Mammary epithelial cell (primary cell): ENCODE measurements at regions of chr17 and their contacts with region 1.

Region 1: DNA sequence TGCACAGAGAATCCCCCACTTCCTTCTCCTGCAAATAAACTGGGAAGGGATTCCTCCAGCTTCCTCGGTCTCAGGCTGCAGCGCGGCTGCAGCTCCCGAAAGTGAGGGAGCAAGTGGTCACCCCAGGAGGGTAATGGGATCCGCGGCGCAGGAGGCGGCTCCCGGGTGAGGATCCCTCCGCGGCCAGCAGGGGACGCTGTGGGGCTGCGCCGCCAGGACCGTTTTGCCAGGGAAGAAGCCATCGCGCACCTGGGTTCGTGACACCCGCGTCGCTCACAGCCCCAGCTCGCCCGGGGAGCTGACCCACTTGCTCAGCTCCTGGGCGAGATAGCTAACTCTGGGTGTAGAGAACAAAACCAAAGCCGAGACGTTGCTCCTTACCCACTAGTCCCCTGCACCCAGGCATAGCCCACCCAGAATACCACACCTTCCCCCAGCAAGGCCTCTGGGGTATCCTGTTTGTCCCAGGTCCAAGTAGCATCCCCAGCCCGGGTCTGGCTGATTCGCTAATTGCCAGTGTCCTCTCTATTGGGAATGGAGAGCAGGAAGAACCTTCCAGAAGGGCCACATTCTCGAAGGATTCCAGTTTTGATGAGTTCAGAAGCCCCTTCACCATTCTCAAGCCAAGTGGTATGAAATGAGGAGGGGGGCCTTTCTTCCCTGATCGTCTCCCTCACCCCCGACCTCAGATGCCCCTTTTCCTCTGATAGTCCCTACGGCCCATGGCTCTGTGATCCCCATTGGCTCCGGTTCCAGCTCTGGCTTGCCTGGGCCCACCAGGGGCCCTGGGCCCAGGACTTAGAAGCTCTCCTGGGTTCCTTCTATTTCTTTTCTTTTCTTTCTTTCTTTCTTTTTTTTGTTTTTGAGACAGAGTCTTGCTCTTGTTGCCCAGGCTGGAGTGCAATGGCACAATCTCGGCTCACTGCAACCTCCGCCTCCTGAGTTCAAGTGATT is 14.1 kb downstream of the CYGB start:
- DNase-seq: peak; percentile 58
- H3K4me3 ChIP-seq: no peak overlapping the region
- H3K27ac ChIP-seq: no peak overlapping the region
- H3K4me1 ChIP-seq: peaks cover 27% of the 10 kb centered on the region
- H3K27me3 ChIP-seq: peaks cover 5% of the 10 kb centered on the region
- CTCF ChIP-seq: peak; percentile 89 to 100

Region 2: DNA sequence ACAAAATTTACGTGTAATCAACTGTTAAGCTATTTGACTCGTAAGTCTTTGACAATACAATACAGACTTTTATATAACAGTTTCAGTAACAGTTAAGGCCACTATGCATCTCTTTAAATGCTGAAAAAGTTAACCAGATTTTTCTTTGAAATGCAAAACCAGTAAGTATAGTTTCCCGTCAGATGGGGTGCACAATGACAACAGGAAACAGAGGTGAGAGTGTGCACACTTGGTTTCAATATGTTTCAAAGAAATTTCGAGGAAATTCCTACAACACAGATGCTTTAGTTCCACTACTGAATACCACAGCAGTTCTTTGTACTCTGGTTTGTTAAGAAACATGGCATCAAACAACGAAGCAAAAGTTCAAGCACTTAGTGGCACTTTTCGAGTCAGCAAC is 331.5 kb before region 1 on chr17:
- CTCF ChIA-PET with region 1: no interaction called
- dilution Hi-C with region 1: no loop called
- in situ Hi-C with region 1: no loop called
- intact Hi-C with region 1: no loop called
- DNase-seq: no peak
- H3K4me3 ChIP-seq: no peak overlapping the region
- H3K27ac ChIP-seq: no peak overlapping the region
- H3K4me1 ChIP-seq: no peaks in the 10 kb centered on the region
- H3K27me3 ChIP-seq: no peaks in the 10 kb centered on the region
- CTCF ChIP-seq: no peak

Region 3: GRCh38 chr17:76547184-76547641 is 23.9 kb after region 1 on chr17:
- CTCF ChIA-PET with region 1: interaction called, 8 read pairs
- dilution Hi-C with region 1: no loop called
- in situ Hi-C with region 1: no loop called
- intact Hi-C with region 1: loop called (anchors 1 kb)
- DNase-seq: no peak
- H3K4me3 ChIP-seq: no peak overlapping the region
- H3K27ac ChIP-seq: peak overlapping the region; percentile 68
- H3K4me1 ChIP-seq: peaks cover 56% of the 10 kb centered on the region
- H3K27me3 ChIP-seq: no peaks in the 10 kb centered on the region
- CTCF ChIP-seq: peak; percentile 48 to 73

Region 4: DNA sequence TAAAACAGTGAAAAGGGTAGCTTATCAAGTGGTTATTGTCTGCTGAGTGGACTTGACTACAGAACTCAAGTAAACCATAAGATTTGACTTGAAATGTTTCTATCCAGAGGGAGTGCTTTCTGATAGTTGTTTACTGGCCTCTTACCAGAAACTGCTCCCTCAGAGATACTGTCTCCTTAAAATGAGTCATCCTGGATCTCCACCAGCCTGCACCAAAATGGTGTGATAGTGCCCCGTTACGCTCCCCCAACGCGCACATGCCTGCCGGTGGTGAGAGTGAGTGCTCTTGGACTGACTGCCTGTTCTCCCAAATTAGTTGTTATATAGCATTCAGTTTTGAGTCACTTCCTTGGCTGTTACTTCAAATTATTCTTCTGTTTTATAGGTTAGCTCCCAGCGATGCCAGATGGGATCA is 39.4 kb after region 1 on chr17:
- CTCF ChIA-PET with region 1: no interaction called
- dilution Hi-C with region 1: no loop called
- in situ Hi-C with region 1: no loop called
- intact Hi-C with region 1: loop called (anchors 1 kb)
- DNase-seq: peak; percentile 82
- H3K4me3 ChIP-seq: no peak overlapping the region
- H3K27ac ChIP-seq: peak overlapping the region; percentile 58
- H3K4me1 ChIP-seq: peaks cover 40% of the 10 kb centered on the region
- H3K27me3 ChIP-seq: no peaks in the 10 kb centered on the region
- CTCF ChIP-seq: no peak

Region 5: DNA sequence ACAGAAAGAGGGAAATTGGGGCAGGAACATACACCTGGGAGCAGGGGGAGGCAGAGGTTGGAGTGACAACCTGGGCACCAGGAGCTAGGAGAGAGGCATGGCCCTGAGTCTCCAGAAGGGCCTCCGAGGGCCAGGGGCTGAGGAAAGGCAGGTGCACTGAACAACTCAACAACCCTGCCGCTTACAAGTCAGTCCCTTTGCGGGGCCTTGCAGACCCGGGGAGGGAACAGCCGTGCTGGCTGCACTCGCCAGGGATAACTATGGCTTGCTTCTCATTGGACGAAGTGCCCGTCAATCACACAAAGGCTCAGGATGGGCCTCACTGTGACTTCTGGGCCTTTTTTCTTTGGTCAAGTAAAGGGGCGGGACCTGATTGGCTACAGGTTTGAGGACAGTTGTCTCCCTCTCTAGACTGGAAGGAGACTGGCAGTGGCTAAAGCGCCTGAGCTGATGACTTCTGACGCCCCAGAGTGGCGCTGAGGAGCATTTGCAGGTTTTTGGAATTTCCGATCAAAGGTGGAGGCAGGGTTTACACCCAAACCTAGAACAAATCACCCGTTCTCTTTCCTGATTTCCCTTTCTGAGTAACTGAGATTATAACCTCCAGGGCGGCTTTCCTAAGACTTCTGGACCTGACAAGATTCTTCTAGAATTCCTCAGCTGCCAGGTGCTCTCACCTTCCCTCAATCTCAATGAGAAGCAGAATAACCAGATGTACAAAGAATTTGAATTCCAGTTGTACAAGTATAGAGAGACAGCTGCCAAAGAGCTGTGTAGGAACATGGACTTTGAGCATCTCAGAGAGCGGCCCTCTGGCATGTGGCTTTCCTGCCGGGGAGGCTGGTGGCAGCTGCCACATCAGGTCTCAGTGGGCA is 89.9 kb after region 1 on chr17:
- CTCF ChIA-PET with region 1: interaction called, 3 read pairs
- dilution Hi-C with region 1: no loop called
- in situ Hi-C with region 1: no loop called
- intact Hi-C with region 1: loop called (anchors 1 kb)
- DNase-seq: peak; percentile 72
- H3K4me3 ChIP-seq: no peak overlapping the region
- H3K27ac ChIP-seq: no peak overlapping the region
- H3K4me1 ChIP-seq: peaks cover 3% of the 10 kb centered on the region
- H3K27me3 ChIP-seq: no peaks in the 10 kb centered on the region
- CTCF ChIP-seq: peak; percentile 37 to 77

Region 6: DNA sequence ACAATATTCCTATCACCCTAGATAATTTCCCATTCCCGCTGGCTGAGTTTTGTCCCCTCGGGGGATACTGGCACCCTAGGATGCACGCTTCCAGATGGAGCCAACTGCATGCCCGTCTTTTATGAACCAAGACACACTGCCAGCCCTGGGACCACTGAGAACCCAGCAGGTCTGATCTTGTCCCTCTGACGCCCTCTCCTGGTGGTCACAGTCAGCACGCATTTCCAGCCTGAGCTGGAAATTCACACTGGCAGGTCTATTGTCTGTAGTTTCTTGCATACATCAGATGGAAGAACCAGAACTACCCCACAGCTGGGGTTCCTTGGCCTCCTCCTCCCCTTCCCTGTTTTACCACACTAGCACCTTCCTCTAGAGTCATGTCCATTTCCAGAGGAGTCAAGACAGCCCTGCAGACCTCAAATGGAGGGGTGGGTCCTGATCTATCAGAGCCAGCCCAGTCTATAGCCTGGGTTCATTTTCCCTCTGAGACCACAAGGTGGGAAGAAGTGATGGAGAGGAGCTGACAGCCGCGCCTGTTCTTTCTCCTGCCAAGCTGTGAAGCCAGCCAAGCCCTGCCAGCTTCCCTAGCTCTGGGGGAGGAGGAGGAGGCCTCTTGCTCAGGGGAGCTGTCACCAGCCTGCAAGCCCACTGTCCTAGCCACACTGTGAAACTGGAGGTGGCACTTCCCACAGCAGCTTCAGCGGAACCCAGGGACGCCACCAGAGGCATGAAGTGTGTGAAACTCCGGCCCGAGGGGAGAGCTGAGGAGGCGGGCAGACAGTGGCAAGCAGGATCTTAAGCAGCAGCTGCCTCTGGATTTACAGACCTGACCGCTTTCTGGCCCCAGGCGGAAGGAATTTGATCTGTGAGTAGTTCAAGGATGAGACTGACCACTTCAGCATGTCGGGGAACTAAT is 158.1 kb after region 1 on chr17:
- CTCF ChIA-PET with region 1: no interaction called
- dilution Hi-C with region 1: no loop called
- in situ Hi-C with region 1: no loop called
- intact Hi-C with region 1: loop called (anchors 1 kb)
- DNase-seq: peak; percentile 48
- H3K4me3 ChIP-seq: no peak overlapping the region
- H3K27ac ChIP-seq: no peak overlapping the region
- H3K4me1 ChIP-seq: no peaks in the 10 kb centered on the region
- H3K27me3 ChIP-seq: no peaks in the 10 kb centered on the region
- CTCF ChIP-seq: peak; percentile 73 to 89